Sciatic nerve (tissue), 2 donors: ENCODE measurements at regions of chr17 and their contacts with region 1.

Region 1: DNA sequence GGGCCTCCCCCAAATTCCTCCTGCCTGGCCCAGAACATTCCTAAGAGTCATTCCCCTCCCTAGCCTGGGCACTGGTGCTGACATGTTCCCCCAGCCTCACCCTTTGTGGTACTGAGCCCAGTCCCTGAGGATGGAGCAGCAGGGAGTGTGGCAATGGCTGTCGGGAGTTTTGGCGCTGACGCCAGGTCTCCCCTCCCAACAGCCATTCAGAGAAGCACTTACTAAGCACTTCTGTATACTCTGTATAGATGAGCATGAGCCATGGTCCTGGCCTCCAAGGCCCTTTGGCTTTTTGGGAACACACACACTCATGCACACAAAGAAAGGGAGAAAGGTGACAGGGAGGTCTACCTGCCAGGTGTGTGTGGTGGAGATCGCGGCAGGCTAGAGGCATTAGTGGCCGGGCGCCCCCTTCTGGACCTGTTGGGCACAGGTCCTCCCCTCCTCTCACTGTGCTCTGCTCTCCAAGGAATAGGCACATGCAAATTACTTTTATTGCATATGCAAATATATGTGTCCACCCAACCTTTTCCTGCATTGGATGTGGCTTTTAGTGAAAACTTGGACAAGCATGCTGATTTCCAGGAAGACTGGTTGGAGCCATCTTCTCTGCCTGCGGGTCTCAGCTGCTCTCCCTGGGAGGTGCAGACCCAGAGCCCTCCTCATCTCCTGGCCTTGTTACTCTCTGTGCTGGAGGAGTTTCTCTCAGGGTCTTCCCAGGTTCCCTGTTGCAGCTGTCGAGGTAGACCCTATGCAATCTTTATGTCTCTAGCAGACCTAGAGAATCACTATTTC is 17.4 kb upstream of the C17orf107 start:
- DNase-seq: peak; percentile 76
- ATAC-seq: peak; percentile 62

Region 2: DNA sequence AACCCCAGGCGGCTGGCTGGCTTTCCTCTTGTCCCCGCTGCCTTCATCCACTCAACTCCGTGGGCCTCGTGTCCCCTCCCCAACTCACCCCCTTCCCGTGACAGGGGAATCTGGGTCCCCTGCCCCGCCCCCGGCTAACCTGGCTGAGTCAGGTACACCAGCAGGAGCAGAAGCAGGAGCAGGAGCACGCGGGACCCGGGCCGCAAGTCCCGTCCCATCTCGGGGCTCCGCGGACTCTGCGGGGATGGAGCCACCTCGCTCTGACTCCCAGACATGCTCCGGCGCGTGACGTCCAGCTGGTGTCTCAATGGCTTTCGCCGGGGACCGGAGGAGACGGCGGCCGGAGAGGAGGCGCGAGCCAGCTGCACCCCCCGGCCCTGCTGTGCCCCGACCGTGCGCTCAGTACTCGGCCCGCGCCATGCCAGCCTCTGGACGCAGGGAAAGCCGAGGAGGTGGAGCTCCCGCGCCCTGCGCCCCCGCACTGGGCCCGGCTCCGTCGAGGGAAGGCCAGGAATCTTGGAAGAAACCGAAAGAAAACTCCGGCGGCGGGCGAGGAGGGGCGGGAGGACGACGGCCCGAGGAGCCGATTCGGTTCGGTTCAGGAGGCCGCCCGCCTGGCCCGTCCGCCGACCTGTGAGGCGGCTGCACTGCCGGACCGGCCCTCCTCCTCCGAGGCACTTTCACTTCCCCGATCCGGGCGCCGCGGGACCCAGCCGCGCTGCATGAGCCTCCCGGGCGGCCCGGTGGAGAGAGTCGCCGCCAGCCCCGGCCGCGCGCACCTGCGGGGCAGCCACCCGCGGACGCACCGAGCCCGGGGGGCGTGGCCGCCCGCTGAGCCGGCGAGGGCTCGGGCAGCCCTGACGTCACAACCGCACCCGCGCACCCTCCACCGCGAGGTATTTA is 142.6 kb before region 1 on chr17 and contains the starts of genes CXCL16 and ZMYND15:
- intact Hi-C with region 1: loop called (anchors 10 kb)
- DNase-seq: peak; percentile 78
- ATAC-seq: peak; percentile 50
- total RNA-seq, gene CXCL16: 30.3 TPM
- total RNA-seq, gene ZMYND15: 3.3 TPM

Region 3: DNA sequence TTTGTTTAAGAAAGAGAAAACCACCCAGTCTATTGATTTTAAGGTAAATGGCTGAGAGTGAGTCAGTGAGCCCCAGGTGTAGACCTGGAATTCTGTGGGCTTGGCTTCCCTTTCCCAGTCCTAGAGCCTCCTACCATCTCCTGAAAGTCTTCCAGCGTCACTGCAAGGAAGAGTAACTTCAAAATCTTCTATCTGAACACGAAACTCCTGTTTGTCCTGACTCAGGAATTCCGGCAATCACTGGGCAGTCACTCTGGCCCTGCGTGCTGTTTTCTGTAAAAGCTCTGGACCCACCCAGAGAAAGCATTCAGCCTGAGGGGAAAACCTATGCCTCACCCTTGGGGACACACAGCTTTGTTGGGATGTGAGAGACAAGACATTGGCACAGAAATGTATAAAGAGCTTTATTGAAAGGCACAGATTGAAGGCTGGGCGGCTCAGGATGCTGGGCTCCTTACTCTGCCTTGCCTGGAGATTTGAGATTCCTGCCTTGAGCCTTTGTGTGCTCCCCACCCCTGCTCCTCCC is 32.9 kb before region 1 on chr17:
- intact Hi-C with region 1: loop called (anchors 5 kb)
- DNase-seq: no peak
- ATAC-seq: no peak